ENCODE measurements at regions of chr4 and their contacts with region 1.

Region 1: GRCh38 chr4:48898733-48899431 is 7.7 kb downstream of the OCIAD2 start:
- DNase-seq: peak; percentile 78
- H3K4me3 ChIP-seq: no peak overlapping the region
- H3K27ac ChIP-seq: peak overlapping the region; percentile 10
- H3K4me1 ChIP-seq: peaks cover 19% of the 10 kb centered on the region
- H3K27me3 ChIP-seq: no peaks in the 10 kb centered on the region
- CTCF ChIP-seq: no peak
- POLR2A ChIP-seq: peak; percentile 26

Region 2: DNA sequence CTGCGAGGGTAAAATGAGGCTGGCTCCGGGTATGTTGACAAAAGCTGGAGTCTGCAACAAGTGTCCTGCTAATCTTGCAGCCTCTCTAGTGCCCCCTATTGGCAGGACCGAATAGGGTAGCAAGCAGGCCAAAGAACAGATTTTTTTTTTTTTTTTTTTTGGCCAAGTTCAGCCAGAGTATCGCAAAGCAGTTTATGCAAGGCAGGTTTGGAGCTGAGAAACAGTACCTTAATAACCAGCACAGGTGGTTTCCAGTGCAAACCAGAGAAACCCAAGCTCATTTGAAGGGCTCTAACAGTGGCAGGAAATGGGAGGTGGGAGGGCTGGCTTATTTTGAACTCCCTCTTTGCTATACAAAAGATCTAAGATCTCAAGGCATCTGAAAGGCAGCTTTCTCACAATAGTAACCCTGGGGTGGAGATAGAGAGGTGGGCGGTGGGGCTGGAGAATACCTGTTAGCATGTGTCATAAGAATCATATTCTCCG is 45.9 kb after region 1 on chr4:
- CTCF ChIA-PET with region 1: no interaction called
- POLR2A ChIA-PET with region 1: no interaction called
- dilution Hi-C with region 1: no loop called
- intact Hi-C with region 1: loop called (anchors 5 kb)
- DNase-seq: no peak
- H3K4me3 ChIP-seq: no peak overlapping the region
- H3K27ac ChIP-seq: no peak overlapping the region
- H3K4me1 ChIP-seq: peaks cover 4% of the 10 kb centered on the region
- H3K27me3 ChIP-seq: peaks cover 0 to 6% of the 10 kb centered on the region in 2 experiments
- CTCF ChIP-seq: peak; percentile 19 to 30
- POLR2A ChIP-seq: no peak

Measured in endothelial cell of umbilical vein (primary cell).